ENCODE measurements at regions of chr13 and their contacts with region 1.

Region 1: DNA sequence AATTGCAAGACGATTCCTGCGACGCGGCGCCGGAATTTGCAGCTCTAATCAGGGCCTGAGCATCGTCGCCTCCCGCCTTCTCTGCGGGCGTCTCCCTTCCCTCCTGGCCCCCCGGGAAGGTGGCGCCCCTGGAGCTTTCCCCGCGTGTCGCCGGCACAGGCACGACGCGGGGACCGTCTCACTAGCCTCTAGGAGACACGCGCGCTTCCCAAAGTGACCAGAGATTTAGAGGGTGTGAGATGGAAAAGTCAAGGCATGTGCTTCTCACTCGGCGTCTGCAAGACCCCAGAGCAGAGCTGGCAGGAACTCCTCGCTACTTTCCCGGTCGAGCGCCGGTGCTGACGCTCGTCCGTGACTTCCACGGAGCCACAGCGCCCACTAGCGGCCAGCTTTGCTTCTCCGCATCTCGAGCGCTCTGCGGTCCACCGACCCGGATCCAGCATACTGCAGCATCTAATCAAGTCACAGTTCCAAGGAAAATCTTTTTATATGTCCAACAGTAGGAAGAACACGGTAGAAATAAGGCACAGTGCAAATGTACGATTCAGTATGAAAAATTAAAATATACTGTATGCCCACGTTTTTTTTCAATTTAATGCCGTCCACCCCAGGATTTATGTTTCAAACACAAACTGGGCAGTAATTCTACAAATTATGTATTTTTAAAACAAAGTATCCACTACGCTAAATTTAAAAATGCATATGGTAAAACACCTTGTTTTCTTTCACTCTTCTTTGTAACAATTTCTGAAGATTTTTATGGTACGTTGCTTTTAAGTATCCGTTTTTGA is 977 bp upstream of the EFNB2 start:
- DNase-seq: peak; percentile 93
- H3K4me3 ChIP-seq: peak overlapping the region; percentile 47 to 88 (median 81)
- H3K27ac ChIP-seq: peak overlapping the region; percentile 87 to 92 (median 91)
- H3K4me1 ChIP-seq: peaks cover 3 to 14% (median 9%) of the 10 kb centered on the region in 4 donors
- H3K27me3 ChIP-seq: peaks cover 7% of the 10 kb centered on the region
- CTCF ChIP-seq: peak; percentile 95 to 97 (median 96)
- EP300 ChIP-seq: no peak
- POLR2A ChIP-seq: no peak

Region 2: DNA sequence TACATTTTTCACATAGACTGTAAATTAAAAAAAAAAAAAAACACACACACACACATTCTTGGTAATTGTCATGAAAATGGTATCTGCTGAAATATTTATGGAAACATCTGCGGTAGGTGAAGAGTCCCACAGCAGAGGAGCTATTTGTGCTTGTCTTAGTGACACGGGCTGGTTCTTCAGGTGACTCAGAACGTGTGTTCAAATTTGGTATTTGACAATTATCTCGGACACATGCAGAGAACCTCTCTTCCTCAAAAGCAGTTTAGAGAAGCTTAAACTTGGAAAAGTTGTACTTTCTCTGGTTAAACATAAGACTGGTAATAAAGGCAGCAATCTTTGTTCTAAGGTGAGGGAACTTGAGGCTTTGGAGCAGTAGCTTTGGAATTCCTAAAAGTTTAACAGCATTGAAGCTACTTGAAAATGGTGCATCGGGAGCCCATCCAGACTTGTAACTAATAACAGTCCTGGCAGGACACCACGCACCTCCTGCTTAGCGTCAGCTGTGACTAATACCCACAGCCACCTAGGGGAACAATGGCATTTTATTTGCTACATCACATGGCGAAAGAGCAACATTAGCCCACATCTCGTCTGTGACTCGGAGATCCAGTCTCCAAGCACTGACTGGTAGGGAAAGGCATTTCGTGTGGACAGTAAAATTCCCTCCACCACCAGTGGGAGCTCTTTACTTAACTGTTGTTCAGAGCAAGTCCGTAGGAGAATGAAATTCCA is 1965.1 kb before region 1 on chr13:
- in situ Hi-C with region 1: loop called in 2 of 4 experiments (anchors 25 kb)
- intact Hi-C with region 1: no loop called
- DNase-seq: peak; percentile 69
- H3K4me3 ChIP-seq: no peak overlapping the region
- H3K27ac ChIP-seq: no peak overlapping the region
- H3K4me1 ChIP-seq: no peaks in the 10 kb centered on the region
- H3K27me3 ChIP-seq: no peaks in the 10 kb centered on the region
- CTCF ChIP-seq: peak; percentile 57 to 79 (median 64)
- EP300 ChIP-seq: no peak
- POLR2A ChIP-seq: no peak

Region 3: GRCh38 chr13:104586051-104586746 is 1950.2 kb before region 1 on chr13:
- in situ Hi-C with region 1: loop called in 1 of 4 experiments (anchors 25 kb)
- intact Hi-C with region 1: no loop called
- DNase-seq: peak; percentile 41
- H3K4me3 ChIP-seq: peak overlapping the region in 1 of 4 donors; percentile 14
- H3K27ac ChIP-seq: peak overlapping the region in 1 of 4 donors; percentile 38
- H3K4me1 ChIP-seq: peaks cover 0 to 8% (median 4%) of the 10 kb centered on the region in 4 donors
- H3K27me3 ChIP-seq: no peaks in the 10 kb centered on the region
- CTCF ChIP-seq: no peak
- EP300 ChIP-seq: no peak
- POLR2A ChIP-seq: no peak

Region 4: DNA sequence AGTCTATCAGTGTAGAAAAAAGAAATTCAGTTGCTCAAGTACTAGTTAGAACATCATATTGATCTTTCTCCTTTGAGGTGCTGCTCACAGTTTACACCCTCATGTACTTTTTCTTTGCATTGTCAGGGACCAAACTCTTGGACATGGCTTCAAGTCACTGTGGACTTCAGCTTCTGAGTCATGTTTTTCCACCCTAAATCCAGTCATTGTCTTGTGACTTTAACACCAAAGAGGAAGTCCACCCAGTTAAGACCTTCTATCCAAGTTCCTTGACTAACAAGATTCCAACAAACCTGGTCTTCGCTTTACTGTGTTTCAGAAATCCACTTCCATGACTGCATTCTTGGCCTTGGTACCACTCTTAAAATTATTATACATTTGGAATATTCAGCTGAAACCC is 238.2 kb after region 1 on chr13:
- in situ Hi-C with region 1: no loop called
- intact Hi-C with region 1: no loop called
- DNase-seq: no peak
- H3K4me3 ChIP-seq: no peak overlapping the region
- H3K27ac ChIP-seq: no peak overlapping the region
- H3K4me1 ChIP-seq: no peaks in the 10 kb centered on the region
- H3K27me3 ChIP-seq: no peaks in the 10 kb centered on the region
- CTCF ChIP-seq: no peak
- EP300 ChIP-seq: no peak
- POLR2A ChIP-seq: no peak

Measured in transverse colon (tissue), 4 donors.